ENCODE measurements at regions of chr10 and their contacts with region 1.

Region 1: GRCh38 chr10:79400146-79401004 is 45.0 kb downstream of the ZCCHC24 start:
- DNase-seq: peak; percentile 97
- ATAC-seq: peak; percentile 57
- H3K4me3 ChIP-seq: no peak overlapping the region
- H3K27ac ChIP-seq: no peak overlapping the region
- H3K4me1 ChIP-seq: peaks cover 23% of the 10 kb centered on the region
- H3K27me3 ChIP-seq: no peaks in the 10 kb centered on the region
- CTCF ChIP-seq: peak; percentile 100

Region 2: GRCh38 chr10:79487296-79488194 is 87.2 kb after region 1 on chr10:
- CTCF ChIA-PET with region 1: interaction called, 3 read pairs
- POLR2A ChIA-PET with region 1: no interaction called
- intact Hi-C with region 1: loop called (anchors 1 kb)
- DNase-seq: peak; percentile 97
- ATAC-seq: peak; percentile 69
- H3K4me3 ChIP-seq: no peak overlapping the region
- H3K27ac ChIP-seq: peak overlapping the region; percentile 30
- H3K4me1 ChIP-seq: peaks cover 24% of the 10 kb centered on the region
- H3K27me3 ChIP-seq: no peaks in the 10 kb centered on the region
- CTCF ChIP-seq: peak; percentile 99